ENCODE measurements at regions of chr7 and their contacts with region 1.

Region 1: DNA sequence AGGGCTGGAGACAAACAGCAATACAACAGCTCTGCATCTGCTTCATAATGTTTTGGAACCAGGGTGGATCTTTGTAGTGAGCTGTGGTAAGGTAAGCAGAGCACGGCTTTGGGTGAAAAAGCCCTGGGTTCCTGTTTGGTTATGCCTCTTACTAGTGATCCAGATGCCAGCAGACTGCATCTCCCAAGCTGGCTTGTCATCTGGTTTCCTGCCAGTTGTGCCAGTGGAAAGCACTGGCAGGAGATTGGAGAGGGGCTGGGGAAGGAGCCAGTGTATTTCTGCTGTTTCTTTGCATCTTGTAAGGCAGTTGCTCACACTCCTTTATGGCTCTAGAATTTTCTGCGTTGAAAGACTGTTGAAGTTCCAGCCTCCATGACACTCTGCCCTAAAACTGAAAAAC is 137.6 kb downstream of the TSPAN12 start:
- DNase-seq: no peak
- H3K4me3 ChIP-seq: no peak overlapping the region
- H3K27ac ChIP-seq: no peak overlapping the region
- H3K4me1 ChIP-seq: no peaks in the 10 kb centered on the region
- H3K27me3 ChIP-seq: peaks cover 5% of the 10 kb centered on the region; the same call in 1 of the 2 replicates
- CTCF ChIP-seq: no peak
- EP300 ChIP-seq: no peak
- RAD21 ChIP-seq: no peak

Region 2: DNA sequence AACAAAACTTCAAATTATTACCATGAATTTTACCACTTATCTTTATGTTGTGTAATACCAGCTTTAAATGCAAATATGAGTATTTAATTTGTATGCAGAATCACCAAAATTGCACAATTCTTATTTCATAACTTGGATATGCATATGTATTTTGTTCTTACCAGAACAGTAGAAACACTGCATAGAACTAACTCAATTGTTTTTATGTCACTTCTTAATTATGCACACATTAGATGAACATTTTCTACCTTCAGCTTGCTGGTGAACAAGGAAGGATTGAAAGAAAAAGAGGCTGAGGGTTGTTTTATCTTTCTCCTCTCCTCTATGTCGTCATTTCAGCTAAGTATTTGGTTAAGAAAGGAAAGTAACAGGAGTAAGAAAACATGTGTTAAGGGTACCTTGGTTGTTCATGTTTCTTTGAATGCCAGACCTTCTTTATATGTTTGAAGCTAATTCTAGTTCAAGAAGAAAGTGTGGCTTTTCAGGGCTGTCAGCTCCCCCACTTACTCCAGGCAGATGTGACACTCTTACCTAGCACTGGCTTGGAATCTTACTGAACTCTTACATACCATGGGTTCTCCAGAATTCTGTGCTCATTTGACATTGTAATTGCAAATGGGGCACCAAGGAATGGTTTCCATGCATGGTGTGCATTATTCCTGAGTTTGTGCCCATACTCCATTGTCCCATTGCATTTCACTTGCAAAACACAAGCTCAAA is 10.9 kb before region 1 on chr7:
- CTCF ChIA-PET with region 1: interaction called, 50 read pairs
- POLR2A ChIA-PET with region 1: no interaction called
- DNase-seq: no peak
- H3K4me3 ChIP-seq: no peak overlapping the region
- H3K27ac ChIP-seq: no peak overlapping the region
- H3K4me1 ChIP-seq: no peaks in the 10 kb centered on the region
- H3K27me3 ChIP-seq: no peaks in the 10 kb centered on the region
- CTCF ChIP-seq: no peak
- EP300 ChIP-seq: no peak
- RAD21 ChIP-seq: no peak